ENCODE measurements at regions of chr13 and their contacts with region 1.

Region 1: DNA sequence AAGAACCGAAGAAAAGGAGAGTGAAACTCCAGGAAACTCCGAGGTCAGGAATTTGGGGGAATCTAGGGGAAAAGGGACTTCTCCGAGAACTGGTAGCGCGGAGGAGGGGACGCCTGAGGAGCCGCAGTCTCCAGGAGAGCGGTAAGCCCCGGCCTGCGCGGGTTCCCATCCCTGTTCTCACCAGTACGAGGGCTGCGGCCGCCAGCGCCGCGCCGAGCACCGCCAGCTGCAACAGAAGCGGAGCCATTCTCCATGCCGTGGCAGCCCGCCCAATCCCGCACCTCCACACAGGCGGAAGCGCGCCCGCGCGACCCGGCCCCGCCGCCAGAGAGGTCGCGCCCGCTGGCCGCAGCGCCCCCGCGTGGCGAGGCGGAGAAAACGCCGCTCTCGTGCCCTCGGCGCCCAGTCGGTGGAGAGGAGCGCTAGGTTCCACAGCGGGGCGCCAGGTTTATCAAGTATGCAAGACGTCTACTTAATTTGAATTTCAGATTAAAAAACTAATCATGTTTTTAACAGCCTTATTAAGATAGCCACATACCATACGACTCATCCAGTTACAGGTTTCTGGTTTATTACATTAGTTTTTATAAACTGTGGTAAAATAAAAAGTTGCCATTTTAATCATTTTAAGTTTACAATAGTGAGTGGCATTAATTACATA is at the start of gene ALG5:
- DNase-seq: peak; percentile 93 to 96 (median 96)
- H3K4me3 ChIP-seq: peak within 1 kb of the TSS; percentile 89 to 99 (median 96)
- H3K27ac ChIP-seq: peak within 1 kb of the TSS; percentile 95 to 98
- H3K4me1 ChIP-seq: peaks cover 6 to 29% (median 22%) of the 10 kb centered on the region in 4 experiments
- H3K27me3 ChIP-seq: no peaks in the 10 kb centered on the region

Region 2: GRCh38 chr13:36788276-36788675 is 210.9 kb before region 1 on chr13:
- CTCF ChIA-PET with region 1: no interaction called
- POLR2A ChIA-PET with region 1: no interaction called
- DNase-seq: no peak
- H3K4me3 ChIP-seq: no peak overlapping the region
- H3K27ac ChIP-seq: no peak overlapping the region
- H3K4me1 ChIP-seq: peaks cover 0 to 9% (median 6%) of the 10 kb centered on the region in 4 experiments
- H3K27me3 ChIP-seq: no peaks in the 10 kb centered on the region

Region 3: DNA sequence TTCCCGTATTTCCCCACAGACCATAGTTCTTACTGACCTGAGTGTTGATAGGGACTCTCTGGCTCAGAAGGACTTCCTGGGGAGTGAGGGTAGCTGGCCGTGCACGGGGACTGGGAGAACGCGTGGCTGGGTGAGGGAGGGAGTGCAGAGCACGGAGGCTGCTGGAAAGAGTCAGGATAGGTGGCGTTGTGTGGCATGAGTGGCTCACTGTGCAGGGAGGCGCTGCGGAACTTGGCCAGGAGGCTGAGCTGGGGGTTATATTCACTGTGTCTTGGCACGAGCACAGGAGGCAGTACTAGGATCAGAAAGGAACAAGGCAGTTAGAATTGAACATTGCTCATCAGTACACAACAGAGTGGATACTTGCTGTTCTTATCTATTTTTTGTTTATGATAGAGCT is 126.6 kb before region 1 on chr13:
- CTCF ChIA-PET with region 1: no interaction called
- POLR2A ChIA-PET with region 1: no interaction called
- DNase-seq: no peak
- H3K4me3 ChIP-seq: no peak overlapping the region
- H3K27ac ChIP-seq: no peak overlapping the region
- H3K4me1 ChIP-seq: no peaks in the 10 kb centered on the region
- H3K27me3 ChIP-seq: peaks cover 0 to 1% (median 0%) of the 10 kb centered on the region in 5 experiments

Region 4: DNA sequence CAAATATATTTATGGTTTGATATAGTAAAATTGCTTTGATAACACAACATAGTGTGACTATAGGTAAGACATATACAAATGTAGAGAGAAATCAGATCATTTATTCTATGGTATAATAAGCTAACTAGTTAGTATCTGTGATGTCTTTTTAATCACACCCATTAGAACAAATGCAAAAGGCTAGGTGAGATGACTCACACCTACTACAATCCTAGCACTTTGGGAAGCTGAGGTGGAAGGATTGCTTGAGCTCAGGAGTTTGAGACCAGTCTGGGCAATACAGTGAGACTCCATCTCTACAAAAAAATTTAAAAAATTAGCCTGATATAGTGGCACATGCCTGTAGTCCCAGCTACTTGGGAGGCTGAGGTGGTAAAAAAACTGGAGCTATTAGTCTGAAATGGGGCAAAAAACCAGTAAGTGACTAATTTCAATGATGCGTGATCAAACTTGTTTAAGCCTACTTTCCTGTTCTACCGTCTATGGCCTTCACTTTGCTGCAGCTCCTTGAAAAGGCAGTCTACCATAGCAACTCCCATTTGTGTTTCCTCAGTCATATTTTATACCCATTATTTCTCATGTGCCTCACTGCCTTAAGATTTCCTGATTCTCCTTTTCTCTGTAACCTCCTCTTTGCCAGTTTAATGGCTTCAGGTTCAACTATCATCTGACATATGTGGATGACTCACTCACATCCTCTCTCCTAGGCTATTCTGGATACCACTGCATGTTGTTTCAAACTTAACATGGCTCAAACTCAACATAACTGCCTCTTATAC is 12.5 kb before region 1 on chr13:
- CTCF ChIA-PET with region 1: interaction called, 11 read pairs
- POLR2A ChIA-PET with region 1: no interaction called
- DNase-seq: no peak
- H3K4me3 ChIP-seq: no peak overlapping the region
- H3K27ac ChIP-seq: no peak overlapping the region
- H3K4me1 ChIP-seq: no peaks in the 10 kb centered on the region
- H3K27me3 ChIP-seq: no peaks in the 10 kb centered on the region

Region 5: DNA sequence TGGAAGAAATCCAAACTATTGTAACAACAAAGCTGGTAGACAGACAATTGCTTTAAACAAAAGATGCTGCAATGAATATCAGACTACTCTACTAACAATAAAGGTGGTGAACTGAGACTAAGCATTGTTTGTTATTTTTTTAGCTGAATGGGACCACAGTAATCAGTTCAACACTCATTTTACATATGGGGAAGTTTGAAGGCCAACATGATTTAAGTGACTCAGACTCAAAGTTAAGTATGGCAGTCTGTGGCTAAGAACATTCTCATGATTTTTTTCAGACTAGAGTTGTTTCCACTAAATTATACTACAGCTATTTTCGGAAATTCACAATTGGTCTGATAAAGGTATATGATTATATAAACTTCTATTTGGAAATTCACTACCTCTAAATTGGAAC is 11.8 kb after region 1 on chr13:
- CTCF ChIA-PET with region 1: interaction called, 11 read pairs
- POLR2A ChIA-PET with region 1: no interaction called
- DNase-seq: peak in 2 of 3 donors; percentile 13 to 33
- H3K4me3 ChIP-seq: no peak overlapping the region
- H3K27ac ChIP-seq: peak overlapping the region in 1 of 2 experiments; percentile 2
- H3K4me1 ChIP-seq: no peaks in the 10 kb centered on the region
- H3K27me3 ChIP-seq: no peaks in the 10 kb centered on the region

Region 6: GRCh38 chr13:37068962-37069361 is 69.8 kb after region 1 on chr13:
- CTCF ChIA-PET with region 1: interaction called, 13 read pairs
- POLR2A ChIA-PET with region 1: no interaction called
- DNase-seq: peak in 2 of 3 donors; percentile 24 to 38
- H3K4me3 ChIP-seq: no peak overlapping the region
- H3K27ac ChIP-seq: no peak overlapping the region
- H3K4me1 ChIP-seq: no peaks in the 10 kb centered on the region
- H3K27me3 ChIP-seq: no peaks in the 10 kb centered on the region

Region 7: GRCh38 chr13:37097076-37097475 is 97.9 kb after region 1 on chr13:
- CTCF ChIA-PET with region 1: no interaction called
- POLR2A ChIA-PET with region 1: no interaction called
- DNase-seq: no peak
- H3K4me3 ChIP-seq: no peak overlapping the region
- H3K27ac ChIP-seq: no peak overlapping the region
- H3K4me1 ChIP-seq: no peaks in the 10 kb centered on the region
- H3K27me3 ChIP-seq: peaks cover 0 to 5% (median 0%) of the 10 kb centered on the region in 5 experiments